ENCODE measurements at regions of chr5 and their contacts with region 1.

Region 1: DNA sequence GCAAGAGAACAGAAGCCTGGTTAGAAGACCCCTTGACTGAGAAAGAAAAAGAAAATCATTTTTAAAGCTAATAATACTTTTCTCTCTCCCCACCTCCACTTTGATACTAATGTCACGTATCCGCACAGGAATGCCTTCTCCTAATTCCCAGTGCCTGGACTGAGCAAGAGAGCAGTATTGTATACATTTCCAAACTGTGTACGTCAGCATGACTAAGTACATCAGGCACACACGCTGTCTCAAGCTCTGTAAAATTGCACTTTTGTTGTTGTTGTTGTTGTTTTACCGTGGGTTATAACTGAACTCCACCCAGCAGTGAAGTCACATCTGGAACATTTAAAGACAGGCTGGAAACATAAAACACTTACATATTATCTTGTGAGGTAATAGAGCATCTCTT is 407.6 kb downstream of the DNAH5 start:
- DNase-seq: no peak
- ATAC-seq: no peak

Region 2: DNA sequence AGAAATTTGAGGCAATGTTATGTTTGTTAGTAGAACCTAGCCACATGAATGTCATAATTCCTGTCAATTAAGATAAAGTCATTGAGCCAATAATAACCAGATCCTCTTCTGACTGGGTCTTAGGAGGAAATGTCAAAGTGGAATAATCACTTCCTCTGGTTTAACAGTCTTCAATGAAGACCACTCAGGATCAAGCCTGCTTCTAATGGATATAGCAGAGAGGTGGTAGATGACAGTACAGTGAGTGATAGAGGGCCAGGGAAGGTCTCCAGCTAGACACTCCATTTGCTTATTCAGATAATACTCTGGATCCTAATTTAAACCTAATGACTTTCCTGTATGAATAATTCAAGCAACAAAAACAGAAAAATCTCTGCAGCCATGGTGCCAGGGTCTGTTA is 66.7 kb before region 1 on chr5:
- intact Hi-C with region 1: no loop called
- DNase-seq: no peak
- ATAC-seq: no peak

Region 3: DNA sequence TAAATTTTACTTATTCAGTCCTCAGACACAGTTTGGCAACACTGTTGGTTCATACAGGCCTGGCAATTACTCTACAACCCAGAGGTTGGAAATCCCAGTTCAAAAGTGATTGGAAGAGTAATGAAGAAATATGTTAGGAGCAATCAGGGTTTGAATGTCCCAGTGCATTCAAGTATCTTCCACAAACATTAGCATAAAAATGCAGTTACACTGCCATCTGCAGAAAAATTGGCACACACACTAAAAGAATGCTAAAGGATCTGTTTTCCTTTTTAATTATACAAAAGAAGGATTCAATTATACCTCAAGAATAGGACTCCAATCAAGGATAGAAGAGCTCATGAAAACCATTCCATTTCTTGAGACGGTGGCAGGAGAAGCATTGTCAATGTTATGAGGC is 277.4 kb after region 1 on chr5:
- intact Hi-C with region 1: loop called (anchors 10 kb)
- DNase-seq: no peak
- ATAC-seq: no peak

Measured in left ventricle myocardium superior (tissue), 1 donor.